ENCODE measurements at regions of chr2 and their contacts with region 1.

Region 1: DNA sequence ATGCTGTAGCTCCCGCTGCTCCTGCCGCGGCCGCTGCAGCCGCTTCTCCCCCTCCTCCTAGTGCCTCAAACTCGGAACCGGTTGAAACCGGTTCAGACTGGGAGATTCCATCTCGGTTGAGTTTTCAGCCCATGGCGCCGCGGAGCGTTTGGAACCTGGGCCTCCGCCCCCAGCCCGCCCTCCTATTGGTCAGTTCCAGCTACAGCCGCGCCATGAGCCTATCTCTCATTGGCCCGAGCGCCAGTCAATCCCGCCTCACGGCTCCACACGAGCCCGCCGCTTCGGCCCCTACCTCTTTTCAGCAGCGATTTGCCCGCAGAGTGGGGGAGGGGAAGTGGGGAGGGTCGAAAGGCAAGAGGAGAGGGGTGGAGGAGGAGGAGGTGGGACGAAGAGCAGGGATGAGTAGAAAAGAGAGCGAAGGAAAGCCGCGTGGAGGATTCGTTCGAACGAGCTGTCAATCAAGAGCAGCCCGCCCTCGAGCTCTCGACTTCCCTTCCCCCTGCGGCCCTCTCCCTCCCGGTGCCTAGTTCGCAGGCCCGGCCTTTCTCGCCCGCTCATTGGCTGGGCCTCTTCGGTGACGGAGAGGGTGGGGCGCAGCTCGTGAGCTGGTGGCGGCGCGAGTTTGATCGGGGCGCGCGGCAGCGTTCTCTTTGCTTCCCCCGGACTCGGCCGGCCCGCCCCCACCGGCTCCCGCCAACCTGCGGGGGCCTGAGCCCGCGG is at the start of gene XPO1:
- H3K4me3 Mint-ChIP-seq: peak within 1 kb of the TSS; percentile 98
- H3K27ac Mint-ChIP-seq: peak within 1 kb of the TSS; percentile 98
- H3K4me1 Mint-ChIP-seq: peaks cover 33% of the 10 kb centered on the region
- H3K27me3 Mint-ChIP-seq: no peaks in the 10 kb centered on the region

Region 2: GRCh38 chr2:61135510-61135909 is 402.9 kb before region 1 on chr2:
- intact Hi-C with region 1: no loop called
- H3K4me3 Mint-ChIP-seq: no peak overlapping the region
- H3K27ac Mint-ChIP-seq: no peak overlapping the region
- H3K4me1 Mint-ChIP-seq: peaks cover 5% of the 10 kb centered on the region
- H3K27me3 Mint-ChIP-seq: no peaks in the 10 kb centered on the region

Region 3: GRCh38 chr2:61470965-61471904 is 67.1 kb before region 1 on chr2 and contains the start of gene USP34:
- intact Hi-C with region 1: loop called (anchors 5 kb)
- H3K4me3 Mint-ChIP-seq: peak within 1 kb of the TSS; percentile 92
- H3K27ac Mint-ChIP-seq: peak within 1 kb of the TSS; percentile 99
- H3K4me1 Mint-ChIP-seq: peaks cover 20% of the 10 kb centered on the region
- H3K27me3 Mint-ChIP-seq: no peaks in the 10 kb centered on the region

Region 4: DNA sequence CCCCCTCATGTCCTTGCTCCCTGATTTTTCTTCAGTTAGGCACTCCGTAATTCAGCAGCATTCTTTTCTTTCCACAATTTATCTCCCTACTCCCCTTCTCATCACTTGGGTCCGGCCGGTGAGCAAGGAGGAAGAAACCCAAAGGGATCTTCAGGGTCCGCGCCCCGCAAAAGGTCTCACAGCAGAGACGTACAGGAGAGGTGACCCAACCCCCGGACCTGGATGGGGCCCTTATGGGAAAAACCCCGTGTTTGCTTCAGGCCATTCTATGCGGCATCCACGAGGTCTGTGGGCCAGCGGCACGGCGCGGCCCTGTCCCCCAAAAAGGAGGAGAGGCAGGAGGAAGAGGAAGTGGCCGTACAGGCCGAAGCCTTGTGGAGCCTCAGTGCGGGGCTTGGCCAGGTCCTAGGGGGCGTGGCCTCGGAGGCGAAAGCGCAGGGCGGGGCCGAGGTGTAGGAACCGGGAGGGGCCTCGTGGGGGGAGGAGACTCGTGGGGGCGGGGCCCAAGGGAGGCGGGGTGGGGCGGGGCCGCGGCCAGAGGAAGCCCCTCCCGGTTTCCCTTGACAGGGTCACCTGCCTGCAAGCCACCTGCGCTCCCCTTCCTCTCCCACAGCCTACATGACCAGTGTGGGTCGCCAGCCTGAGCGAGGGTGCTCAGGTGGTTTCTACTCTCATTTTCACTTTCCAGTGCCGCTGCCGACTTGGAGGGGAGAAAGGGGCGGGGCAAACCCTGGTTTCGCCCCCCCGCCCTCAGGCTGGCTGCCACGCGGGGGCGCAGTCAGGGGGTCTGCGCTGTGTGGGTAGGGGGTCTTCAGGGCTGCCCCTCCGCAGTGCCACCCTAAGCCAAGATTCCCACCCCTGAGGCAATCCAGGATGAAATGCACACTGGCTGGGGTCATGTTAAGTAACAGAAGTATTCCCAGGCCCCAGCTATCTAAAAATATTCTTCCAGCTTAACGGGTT is 156.2 kb after region 1 on chr2:
- intact Hi-C with region 1: loop called (anchors 2 kb)
- H3K4me3 Mint-ChIP-seq: peak overlapping the region; percentile 96
- H3K27ac Mint-ChIP-seq: peak overlapping the region; percentile 97
- H3K4me1 Mint-ChIP-seq: peaks cover 11% of the 10 kb centered on the region
- H3K27me3 Mint-ChIP-seq: peaks cover 3% of the 10 kb centered on the region

Region 5: DNA sequence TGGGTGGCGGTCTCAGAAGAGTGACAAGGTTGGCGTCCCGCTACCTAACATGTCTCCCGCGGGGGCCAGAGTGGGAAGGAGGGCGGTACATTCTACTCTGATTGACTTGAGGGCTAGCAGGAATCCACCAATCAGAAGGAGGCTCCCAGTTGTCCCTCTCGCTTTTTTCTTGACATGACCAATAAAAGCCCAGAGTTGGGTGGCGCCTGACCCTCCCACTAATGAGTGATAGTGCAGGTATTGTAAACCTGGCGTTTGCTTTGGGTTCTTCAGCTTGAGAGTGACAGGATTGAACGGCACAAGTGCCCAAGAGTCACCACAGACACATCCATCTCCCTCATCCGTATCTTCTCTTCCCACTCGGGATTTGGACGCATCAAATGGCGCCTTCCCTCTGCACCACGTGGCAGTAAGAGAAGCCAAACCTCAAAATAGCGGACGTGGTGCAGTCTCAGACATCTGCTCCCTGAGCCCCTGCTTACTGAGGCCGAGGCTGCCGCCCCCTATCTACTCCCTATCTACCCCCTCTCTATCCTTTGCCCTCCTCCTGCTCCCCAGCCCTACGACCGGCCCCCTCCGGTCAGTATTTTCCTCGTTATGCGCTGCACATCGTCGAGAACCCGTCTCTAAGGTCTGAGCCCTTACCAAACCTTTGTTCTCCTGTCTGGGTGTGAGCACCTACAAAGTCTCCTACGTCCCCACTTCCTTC is 316.3 kb after region 1 on chr2:
- intact Hi-C with region 1: loop called (anchors 2 kb)
- H3K4me3 Mint-ChIP-seq: peak overlapping the region; percentile 100
- H3K27ac Mint-ChIP-seq: peak overlapping the region; percentile 89
- H3K4me1 Mint-ChIP-seq: peaks cover 15% of the 10 kb centered on the region
- H3K27me3 Mint-ChIP-seq: peaks cover 5% of the 10 kb centered on the region

Region 6: GRCh38 chr2:61905372-61906185 is 367.2 kb after region 1 on chr2 and contains the start of gene COMMD1:
- intact Hi-C with region 1: loop called (anchors 5 kb)
- H3K4me3 Mint-ChIP-seq: peak within 1 kb of the TSS; percentile 100
- H3K27ac Mint-ChIP-seq: peak within 1 kb of the TSS; percentile 94
- H3K4me1 Mint-ChIP-seq: peaks cover 7% of the 10 kb centered on the region
- H3K27me3 Mint-ChIP-seq: no peaks in the 10 kb centered on the region